HEK293 (cell line): ENCODE measurements at regions of chr17 and their contacts with region 1.

Region 1: DNA sequence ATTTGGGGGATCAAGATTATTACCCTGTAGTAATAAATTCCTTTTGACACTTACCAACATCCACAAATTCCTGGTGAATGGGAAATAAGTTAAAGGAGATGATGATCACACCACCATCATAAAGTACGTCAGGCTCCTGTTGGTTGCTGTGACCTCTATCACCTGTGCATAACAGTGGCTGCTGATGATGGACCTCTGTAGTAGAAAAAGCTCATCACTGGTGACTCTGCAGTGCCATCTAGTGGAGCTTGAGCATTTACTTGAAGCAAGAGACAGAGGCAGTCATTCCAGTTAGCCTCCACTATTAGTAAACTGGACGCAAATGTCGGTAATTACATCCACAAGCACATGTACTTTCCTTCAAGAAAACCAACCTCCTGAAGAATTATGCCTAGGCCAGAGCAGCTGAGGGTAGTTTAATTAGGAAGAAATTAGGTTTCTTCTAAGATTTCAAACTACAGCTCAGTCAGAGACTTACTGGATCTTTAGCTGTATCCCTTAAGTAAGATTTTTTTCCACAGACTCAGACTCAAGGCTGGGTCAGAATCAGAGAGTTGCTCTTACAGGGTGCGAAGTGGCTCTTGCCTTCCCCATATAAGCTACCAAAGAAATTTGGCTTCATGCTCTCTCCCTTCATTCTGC is 39.3 kb downstream of the CYB561 start:
- H3K4me3 ChIP-seq: no peak overlapping the region
- H3K27ac ChIP-seq: no peak overlapping the region
- H3K4me1 ChIP-seq: no peaks in the 10 kb centered on the region
- CTCF ChIP-seq: peak; percentile 70

Region 2: DNA sequence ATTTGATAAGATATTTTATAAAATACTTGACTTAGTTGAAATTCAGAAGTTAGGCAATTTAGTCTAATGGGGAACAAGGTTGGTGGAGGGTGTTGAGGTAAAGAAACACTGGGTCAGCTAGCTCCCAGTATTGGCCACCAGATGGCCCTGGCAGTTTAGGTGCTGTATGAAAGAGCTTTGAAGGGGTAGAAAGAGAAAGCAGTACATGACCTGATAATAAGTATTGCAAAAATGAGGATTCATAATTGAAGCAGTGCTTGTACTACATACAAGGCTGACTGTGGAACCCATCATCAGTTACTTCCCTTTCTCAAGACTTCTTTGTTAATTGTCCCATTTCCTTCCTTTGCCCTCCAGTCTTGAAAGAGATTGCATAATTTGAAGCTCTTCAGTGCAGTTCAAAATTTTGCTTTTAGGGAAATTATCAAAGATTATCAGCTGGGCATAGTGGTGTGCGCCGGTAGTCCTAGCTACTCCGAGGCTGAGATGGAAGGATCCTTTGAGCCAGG is 411.4 kb before region 1 on chr17:
- CTCF ChIA-PET with region 1: interaction called, 37 read pairs
- POLR2A ChIA-PET with region 1: no interaction called
- H3K4me3 ChIP-seq: no peak overlapping the region
- H3K27ac ChIP-seq: no peak overlapping the region
- H3K4me1 ChIP-seq: peaks cover 6% of the 10 kb centered on the region; the same call in 1 of the 2 replicates
- CTCF ChIP-seq: 0 out of 2 replicates have a peak, but pooled peaks have one; percentile 46

Region 3: GRCh38 chr17:63082273-63082993 is 324.4 kb before region 1 on chr17:
- CTCF ChIA-PET with region 1: interaction called, 48 read pairs
- POLR2A ChIA-PET with region 1: no interaction called
- H3K4me3 ChIP-seq: no peak overlapping the region
- H3K27ac ChIP-seq: no peak overlapping the region
- H3K4me1 ChIP-seq: no peaks in the 10 kb centered on the region
- CTCF ChIP-seq: no peak

Region 4: DNA sequence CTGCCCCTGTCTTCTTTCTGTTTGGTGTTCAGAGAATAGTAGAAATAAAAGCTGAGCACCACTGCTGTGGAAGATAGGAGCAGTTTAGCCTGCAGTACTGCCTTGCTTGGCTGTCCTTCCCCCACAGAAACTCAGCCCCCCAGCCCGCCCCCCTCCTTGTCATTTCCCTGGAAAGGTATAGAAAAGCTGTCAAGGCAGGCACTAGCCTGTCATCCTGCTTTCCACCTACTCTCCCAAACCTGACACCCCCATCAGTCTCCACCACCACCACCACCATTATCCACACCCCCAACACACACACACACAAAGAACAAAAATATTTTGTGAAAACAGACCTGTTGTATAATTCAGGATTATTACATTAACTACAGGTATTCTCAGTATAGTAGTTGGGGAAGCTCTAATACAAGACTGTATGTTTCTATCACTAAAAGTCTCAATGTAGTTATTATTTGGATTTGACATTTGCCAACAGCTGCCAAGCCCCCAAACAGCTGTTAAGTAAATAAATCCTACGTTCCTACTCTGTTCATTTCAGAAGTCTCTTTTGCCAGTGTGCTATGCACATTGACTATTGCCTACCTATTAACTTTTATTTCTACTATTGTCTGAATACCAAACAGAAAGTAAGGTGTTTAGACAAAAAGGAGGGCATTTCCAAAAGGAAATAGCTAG is 89.5 kb before region 1 on chr17:
- CTCF ChIA-PET with region 1: interaction called, 10 read pairs
- POLR2A ChIA-PET with region 1: no interaction called
- H3K4me3 ChIP-seq: no peak overlapping the region
- H3K27ac ChIP-seq: no peak overlapping the region
- H3K4me1 ChIP-seq: no peaks in the 10 kb centered on the region
- CTCF ChIP-seq: no peak

Region 5: DNA sequence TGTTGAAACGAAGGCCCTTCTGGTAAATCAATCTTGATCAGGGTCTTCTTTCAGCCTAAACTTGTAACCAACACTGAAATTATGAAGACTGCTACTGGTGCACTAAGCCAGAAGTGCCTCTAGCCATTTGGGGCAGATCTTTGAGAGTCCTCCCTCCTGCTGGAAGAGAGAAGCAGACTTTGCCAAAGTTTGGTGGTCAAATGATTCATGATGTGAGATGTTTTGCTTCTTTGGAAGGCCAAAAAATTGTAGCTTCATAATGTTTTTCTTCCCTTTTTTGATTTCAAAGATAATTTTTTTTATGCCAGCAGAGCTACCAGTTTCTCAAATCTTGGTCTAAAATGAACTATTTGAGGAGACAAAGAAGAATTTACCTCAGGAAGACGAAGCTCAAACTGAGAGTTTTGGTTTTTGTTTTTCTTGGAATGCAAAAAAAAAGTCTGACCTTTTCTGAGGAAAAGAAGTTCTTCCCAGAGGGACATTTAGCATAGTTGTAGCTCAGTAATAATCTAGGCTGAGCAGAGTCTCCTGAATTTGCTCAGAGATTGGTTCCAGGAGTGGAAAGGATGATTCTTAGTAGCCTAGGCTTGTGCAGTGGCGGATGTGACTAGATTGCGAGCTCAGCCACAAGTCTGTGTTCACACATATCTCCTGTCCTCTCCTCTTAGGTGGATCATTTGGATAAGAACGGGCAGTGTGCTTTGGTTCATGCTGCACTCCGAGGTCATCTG is 11.6 kb before region 1 on chr17:
- CTCF ChIA-PET with region 1: interaction called, 33 read pairs
- POLR2A ChIA-PET with region 1: no interaction called
- H3K4me3 ChIP-seq: no peak overlapping the region
- H3K27ac ChIP-seq: no peak overlapping the region
- H3K4me1 ChIP-seq: no peaks in the 10 kb centered on the region
- CTCF ChIP-seq: no peak